Activated CD4-positive, alpha-beta memory T cell treated with anti-CD3 and anti-CD28 coated beads, Interleukin-2, amount 10 ng/mL, durations not matched to agents 7 days and 5 days (primary cell): ENCODE measurements at regions of chr13 and their contacts with region 1.

Region 1: GRCh38 chr13:30395192-30396084 is 26.9 kb upstream of the UBE2L5 start:
- DNase-seq: peak; percentile 84
- H3K4me3 Mint-ChIP-seq: peak overlapping the region; percentile 83
- H3K27ac Mint-ChIP-seq: peak overlapping the region; percentile 98
- H3K4me1 Mint-ChIP-seq: peaks cover 26% of the 10 kb centered on the region
- H3K27me3 Mint-ChIP-seq: no peaks in the 10 kb centered on the region

Region 2: GRCh38 chr13:30346153-30346788 is 49.2 kb before region 1 on chr13:
- CTCF ChIA-PET with region 1: interaction called, 4 read pairs
- POLR2A ChIA-PET with region 1: interaction called, 14 read pairs
- DNase-seq: peak; percentile 91
- H3K4me3 Mint-ChIP-seq: peak overlapping the region; percentile 38
- H3K27ac Mint-ChIP-seq: peak overlapping the region; percentile 60
- H3K4me1 Mint-ChIP-seq: peaks cover 37% of the 10 kb centered on the region
- H3K27me3 Mint-ChIP-seq: no peaks in the 10 kb centered on the region

Region 3: GRCh38 chr13:30382836-30383525 is 12.5 kb before region 1 on chr13:
- CTCF ChIA-PET with region 1: interaction called, 9 read pairs
- POLR2A ChIA-PET with region 1: interaction called, 27 read pairs
- DNase-seq: no peak
- H3K4me3 Mint-ChIP-seq: no peak overlapping the region
- H3K27ac Mint-ChIP-seq: peak overlapping the region; percentile 52
- H3K4me1 Mint-ChIP-seq: peaks cover 33% of the 10 kb centered on the region
- H3K27me3 Mint-ChIP-seq: no peaks in the 10 kb centered on the region

Region 4: GRCh38 chr13:30408319-30409101 is 13.1 kb after region 1 on chr13:
- CTCF ChIA-PET with region 1: interaction called, 9 read pairs
- POLR2A ChIA-PET with region 1: interaction called, 40 read pairs
- DNase-seq: peak; percentile 93
- H3K4me3 Mint-ChIP-seq: peak overlapping the region; percentile 44
- H3K27ac Mint-ChIP-seq: peak overlapping the region; percentile 31
- H3K4me1 Mint-ChIP-seq: peaks cover 29% of the 10 kb centered on the region
- H3K27me3 Mint-ChIP-seq: peaks cover 11% of the 10 kb centered on the region

Region 5: GRCh38 chr13:30422054-30422839 is 26.8 kb after region 1 on chr13 and contains the start of gene UBE2L5:
- CTCF ChIA-PET with region 1: no interaction called
- POLR2A ChIA-PET with region 1: interaction called, 18 read pairs
- DNase-seq: peak; percentile 80
- H3K4me3 Mint-ChIP-seq: peak within 1 kb of the TSS; percentile 77
- H3K27ac Mint-ChIP-seq: peak within 1 kb of the TSS; percentile 73
- H3K4me1 Mint-ChIP-seq: peaks cover 15% of the 10 kb centered on the region
- H3K27me3 Mint-ChIP-seq: peaks cover 4% of the 10 kb centered on the region
- total RNA-seq, gene UBE2L5: 0.20 TPM in 1 of 2 experiments, not detected in the other